Caco-2 (cell line): ENCODE measurements at regions of chr10 and their contacts with region 1.

Region 1: DNA sequence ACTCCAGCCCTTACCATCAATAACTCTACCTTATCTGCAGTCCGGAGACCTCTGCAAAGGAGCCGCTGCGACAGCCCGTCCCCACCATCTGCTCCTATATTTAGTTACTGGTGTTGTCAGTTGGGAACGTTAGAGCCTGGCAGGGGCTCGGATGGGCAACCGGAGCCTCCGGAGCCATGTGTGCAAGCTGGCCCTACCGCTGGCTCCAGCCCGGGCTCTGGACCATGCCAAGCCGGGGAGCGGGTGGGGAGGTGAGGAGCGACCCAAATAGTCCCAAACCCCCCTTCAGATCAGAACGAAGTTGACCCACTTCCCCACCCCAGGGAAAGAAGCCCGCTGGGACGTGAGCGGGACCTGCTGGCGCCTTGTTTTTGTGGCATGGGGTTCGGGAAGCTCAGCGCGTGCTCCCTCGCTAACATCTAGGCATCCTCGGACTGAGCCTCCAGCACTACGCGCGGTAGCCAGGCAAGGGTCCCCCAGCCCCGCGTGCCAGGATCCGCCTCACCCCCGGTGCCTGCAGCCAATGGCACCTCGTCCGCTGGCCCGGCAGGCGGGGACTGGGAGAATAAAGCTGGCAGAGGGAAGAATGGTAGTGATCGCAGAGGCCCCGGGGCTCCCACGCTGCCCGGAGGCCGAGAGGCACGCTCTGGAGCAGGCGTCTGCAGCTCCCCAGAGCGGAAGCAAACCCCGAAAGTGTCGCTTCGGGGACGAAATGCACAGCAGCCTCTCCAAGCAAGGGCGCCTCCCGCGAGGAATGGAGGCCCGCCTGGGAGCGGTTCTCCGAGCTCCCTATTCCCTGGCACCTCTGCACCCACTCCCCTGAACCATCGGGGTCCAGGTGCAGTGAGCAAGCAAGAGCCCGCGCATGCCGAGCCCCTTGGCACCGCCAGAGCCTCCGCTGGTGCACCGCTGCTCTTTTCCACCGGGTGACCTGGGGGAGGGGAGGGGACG is 679 bp downstream of the LRRC20 start:
- DNase-seq: peak; percentile 65 to 72
- H3K4me3 ChIP-seq: peak overlapping the region; percentile 73
- H3K4me3 Mint-ChIP-seq: peak overlapping the region; percentile 83
- H3K27ac Mint-ChIP-seq: peak overlapping the region; percentile 61
- H3K4me1 ChIP-seq: peaks cover 38% of the 10 kb centered on the region
- H3K4me1 Mint-ChIP-seq: peaks cover 21% of the 10 kb centered on the region
- H3K27me3 ChIP-seq: no peaks in the 10 kb centered on the region
- H3K27me3 Mint-ChIP-seq: no peaks in the 10 kb centered on the region
- CTCF ChIP-seq: no peak

Region 2: DNA sequence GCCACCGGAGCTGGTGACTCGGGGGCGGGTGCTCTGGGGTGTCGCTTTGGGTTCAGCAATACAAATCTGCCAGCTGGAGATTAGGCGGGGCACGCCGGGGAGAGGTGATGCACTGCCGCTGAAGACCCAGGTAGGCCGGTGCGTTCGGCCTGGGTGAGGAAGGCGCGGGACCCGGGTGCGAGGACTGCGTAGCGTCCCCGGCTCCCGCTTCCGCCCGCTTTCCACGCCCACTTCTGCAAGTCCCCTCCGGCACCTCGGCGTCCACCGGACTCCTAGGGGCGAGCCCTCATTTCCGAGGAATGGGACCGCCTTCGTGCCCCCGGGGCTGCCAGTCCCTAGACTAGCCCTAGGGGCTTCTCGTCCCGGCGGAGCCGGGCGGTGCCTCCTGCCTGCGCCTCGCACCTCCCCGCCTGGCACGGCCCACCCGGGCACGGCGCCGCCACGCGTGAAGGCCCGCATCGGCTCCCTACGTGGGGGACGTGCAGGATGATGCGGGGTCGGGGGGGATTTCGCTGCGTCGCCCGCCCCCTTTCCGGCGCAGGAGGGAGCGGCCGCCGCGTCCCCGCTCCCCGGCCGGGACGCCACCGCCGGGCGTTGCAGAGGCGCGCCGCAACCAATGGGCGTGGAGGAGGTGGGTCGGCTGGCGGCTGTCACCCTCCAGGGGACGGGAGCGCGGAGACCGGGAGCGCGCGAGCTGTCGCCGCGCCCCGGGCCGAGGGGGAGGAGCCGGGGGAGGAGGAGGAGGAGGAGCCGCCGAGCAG is 1063.5 kb before region 1 on chr10:
- CTCF ChIA-PET with region 1: no interaction called
- POLR2A ChIA-PET with region 1: no interaction called
- intact Hi-C with region 1: no loop called
- DNase-seq: peak; percentile 92 to 98
- H3K4me3 ChIP-seq: peak overlapping the region; percentile 64
- H3K4me3 Mint-ChIP-seq: peak overlapping the region; percentile 87
- H3K27ac Mint-ChIP-seq: peak overlapping the region; percentile 53
- H3K4me1 ChIP-seq: peaks cover 48% of the 10 kb centered on the region
- H3K4me1 Mint-ChIP-seq: peaks cover 25% of the 10 kb centered on the region
- H3K27me3 ChIP-seq: no peaks in the 10 kb centered on the region
- H3K27me3 Mint-ChIP-seq: no peaks in the 10 kb centered on the region
- CTCF ChIP-seq: no peak

Region 3: GRCh38 chr10:70221030-70221429 is 160.7 kb before region 1 on chr10:
- CTCF ChIA-PET with region 1: interaction called, 131 read pairs
- POLR2A ChIA-PET with region 1: interaction called, 6 read pairs
- intact Hi-C with region 1: no loop called
- DNase-seq: no peak
- H3K4me3 ChIP-seq: no peak overlapping the region
- H3K4me3 Mint-ChIP-seq: no peak overlapping the region
- H3K27ac Mint-ChIP-seq: peak overlapping the region; percentile 19
- H3K4me1 ChIP-seq: peaks cover 12% of the 10 kb centered on the region; the same call in 1 of the 2 replicates
- H3K4me1 Mint-ChIP-seq: peaks cover 14% of the 10 kb centered on the region
- H3K27me3 ChIP-seq: no peaks in the 10 kb centered on the region
- H3K27me3 Mint-ChIP-seq: no peaks in the 10 kb centered on the region
- CTCF ChIP-seq: no peak

Region 4: DNA sequence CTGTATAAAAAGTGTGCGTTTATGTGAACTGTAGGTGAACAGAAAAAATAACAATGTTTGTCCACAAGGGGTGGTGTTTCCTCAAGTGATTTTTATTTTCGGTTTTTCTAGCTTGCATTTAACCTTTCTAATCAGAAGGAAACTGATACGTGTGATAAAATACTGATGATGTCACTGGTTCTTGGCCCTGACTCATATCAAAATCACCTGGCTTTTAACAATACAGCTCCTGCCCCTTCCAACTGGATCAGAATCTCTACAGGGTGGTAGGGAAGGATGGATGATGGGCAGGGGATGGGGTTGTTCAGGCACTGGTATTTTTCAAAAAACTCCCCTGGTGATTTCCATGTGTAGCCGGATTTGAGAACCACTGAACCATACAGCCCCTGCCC is 108.8 kb before region 1 on chr10:
- CTCF ChIA-PET with region 1: interaction called, 10 read pairs
- POLR2A ChIA-PET with region 1: no interaction called
- intact Hi-C with region 1: no loop called
- DNase-seq: no peak
- H3K4me3 ChIP-seq: no peak overlapping the region
- H3K4me3 Mint-ChIP-seq: no peak overlapping the region
- H3K27ac Mint-ChIP-seq: no peak overlapping the region
- H3K4me1 ChIP-seq: no peaks in the 10 kb centered on the region; the same call in 1 of the 2 replicates
- H3K4me1 Mint-ChIP-seq: no peaks in the 10 kb centered on the region
- H3K27me3 ChIP-seq: no peaks in the 10 kb centered on the region; the same call in 1 of the 2 replicates
- H3K27me3 Mint-ChIP-seq: no peaks in the 10 kb centered on the region
- CTCF ChIP-seq: peak; percentile 50 to 68

Region 5: DNA sequence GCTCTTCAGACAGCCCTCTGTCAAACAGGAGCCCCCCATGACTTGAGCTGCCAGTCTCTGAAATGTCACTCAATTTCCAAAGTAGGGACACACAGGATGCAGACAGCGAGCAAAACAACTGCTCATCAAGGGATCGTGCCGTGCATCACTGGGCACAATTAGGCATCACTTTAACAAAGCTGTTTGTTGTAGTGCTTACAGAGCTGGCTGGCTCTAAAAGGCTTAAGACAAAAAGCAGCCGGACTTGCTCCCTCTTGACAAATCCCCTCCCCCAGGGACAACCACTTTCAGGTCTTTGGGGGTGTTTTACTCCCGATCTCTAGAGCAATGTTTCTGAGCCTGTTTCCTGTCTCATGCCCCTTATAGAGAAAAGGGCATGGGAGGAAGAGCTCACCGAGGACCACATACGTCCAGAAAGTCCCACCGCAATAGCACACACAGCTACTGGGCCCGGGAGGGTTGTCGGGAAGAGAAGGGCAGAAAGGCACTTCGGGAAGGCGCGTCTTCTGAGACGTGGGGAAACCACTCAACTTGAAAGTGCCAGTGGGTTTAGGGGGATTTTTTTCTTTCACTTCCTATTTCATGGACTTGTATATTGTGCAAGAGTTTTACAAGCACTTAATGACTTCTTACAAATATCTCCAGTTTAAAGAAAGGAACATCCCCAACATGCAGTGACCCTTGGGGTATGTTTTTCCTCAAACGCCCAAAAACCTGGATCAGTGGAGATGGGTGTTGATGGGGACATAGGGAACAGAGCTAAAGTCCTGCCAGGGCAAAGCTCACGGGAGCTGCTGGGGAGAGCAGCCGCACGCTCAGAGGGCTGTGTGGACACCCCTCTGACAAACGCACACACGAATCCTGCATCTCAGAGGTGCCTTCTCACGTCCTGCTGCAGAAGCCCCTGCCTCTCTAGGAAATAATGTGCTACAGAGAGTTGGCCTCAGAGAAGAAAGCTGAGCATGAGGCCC is 26.4 kb before region 1 on chr10:
- CTCF ChIA-PET with region 1: interaction called, 14 read pairs
- POLR2A ChIA-PET with region 1: no interaction called
- intact Hi-C with region 1: no loop called
- DNase-seq: no peak
- H3K4me3 ChIP-seq: no peak overlapping the region
- H3K4me3 Mint-ChIP-seq: no peak overlapping the region
- H3K27ac Mint-ChIP-seq: no peak overlapping the region
- H3K4me1 ChIP-seq: peaks cover 60% of the 10 kb centered on the region
- H3K4me1 Mint-ChIP-seq: peaks cover 47% of the 10 kb centered on the region
- H3K27me3 ChIP-seq: no peaks in the 10 kb centered on the region
- H3K27me3 Mint-ChIP-seq: no peaks in the 10 kb centered on the region
- CTCF ChIP-seq: no peak

Region 6: DNA sequence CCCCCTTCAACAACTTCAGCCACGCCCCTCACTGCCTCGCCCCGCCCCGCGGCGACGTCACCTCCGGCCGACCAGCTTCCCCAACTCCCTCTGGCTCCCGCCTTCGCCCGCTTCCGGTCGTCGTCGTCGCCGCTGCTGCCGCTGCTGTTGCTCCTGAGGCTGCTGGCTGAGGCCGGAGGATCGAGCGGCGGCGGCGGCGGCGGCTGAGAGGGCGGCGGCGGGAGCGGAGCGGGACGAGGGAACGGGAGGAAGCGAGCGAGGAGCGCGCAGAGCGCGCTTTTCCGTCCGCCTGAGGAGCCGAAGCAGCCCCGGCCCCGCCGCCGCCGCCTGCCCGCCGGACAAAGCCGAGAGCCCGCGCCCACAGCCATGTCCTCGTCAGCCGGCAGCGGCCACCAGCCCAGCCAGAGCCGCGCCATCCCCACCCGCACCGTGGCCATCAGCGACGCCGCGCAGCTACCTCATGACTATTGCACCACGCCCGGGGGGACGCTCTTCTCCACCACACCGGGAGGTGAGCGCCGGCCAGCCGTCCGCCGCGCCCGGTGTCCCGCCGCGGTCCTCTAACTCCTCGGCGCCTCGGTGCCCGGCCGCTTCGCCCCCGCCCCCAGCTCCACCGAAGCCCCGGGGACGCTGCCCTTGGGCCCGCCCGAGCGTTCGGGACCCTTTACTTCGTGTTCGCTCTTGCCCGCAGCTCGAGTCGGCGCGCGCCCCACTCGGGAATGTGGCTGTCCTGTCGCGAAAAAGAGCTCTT is 22.5 kb after region 1 on chr10 and contains the start of gene EIF4EBP2:
- CTCF ChIA-PET with region 1: interaction called, 31 read pairs
- POLR2A ChIA-PET with region 1: interaction called, 34 read pairs
- intact Hi-C with region 1: no loop called
- DNase-seq: peak; percentile 99 to 100
- H3K4me3 ChIP-seq: peak within 1 kb of the TSS; percentile 99
- H3K4me3 Mint-ChIP-seq: peak within 1 kb of the TSS; percentile 95
- H3K27ac Mint-ChIP-seq: peak within 1 kb of the TSS; percentile 91
- H3K4me1 ChIP-seq: peaks cover 15% of the 10 kb centered on the region
- H3K4me1 Mint-ChIP-seq: peaks cover 47% of the 10 kb centered on the region
- H3K27me3 ChIP-seq: no peaks in the 10 kb centered on the region
- H3K27me3 Mint-ChIP-seq: no peaks in the 10 kb centered on the region
- CTCF ChIP-seq: no peak
- total RNA-seq, gene EIF4EBP2: 166 and 168 TPM in 2 replicates

Region 7: DNA sequence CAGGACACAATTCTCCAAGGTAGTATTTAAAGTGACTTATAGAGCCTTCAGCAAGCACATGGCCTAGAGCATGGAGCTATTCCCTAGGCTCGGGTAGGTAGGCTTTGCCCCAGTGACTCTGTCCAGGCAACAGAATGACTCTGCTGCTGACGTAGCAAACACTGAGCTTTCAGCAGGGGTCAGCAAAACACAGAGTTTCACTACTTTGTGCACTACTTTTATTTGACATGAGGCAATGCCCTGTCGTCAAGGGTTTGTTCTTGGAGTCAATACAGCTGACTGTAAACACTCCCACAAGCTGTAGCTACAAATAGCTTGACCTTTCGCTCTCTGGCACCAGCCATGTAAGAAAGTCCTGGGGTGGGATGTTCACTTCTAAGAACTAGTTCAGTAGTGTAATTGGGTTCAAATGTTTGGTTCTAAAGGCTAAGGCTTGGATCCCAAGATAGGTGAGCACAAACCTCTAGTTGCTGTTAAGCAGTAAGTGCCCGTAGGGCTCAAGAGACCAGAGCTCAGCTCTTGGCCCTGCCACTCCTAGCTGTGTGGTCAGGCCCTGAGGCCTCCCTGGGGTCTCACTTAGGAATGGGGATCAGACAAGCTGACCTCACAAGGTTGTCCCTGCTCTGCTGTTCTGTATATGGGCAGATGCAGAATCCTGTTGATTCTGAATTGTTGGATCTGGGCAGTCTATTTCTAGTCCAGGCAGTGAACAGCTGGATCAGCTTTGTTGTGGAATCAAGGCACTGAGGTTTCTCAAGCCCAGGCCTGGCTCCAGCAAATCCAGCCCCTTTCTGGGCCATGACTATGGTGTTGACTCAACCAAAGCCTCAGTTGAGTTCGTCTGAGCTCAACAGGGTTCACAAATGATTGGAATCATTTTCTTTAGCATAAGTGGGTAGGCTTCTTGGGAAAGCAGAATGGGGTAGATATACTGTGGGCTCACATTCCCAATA is 49.0 kb after region 1 on chr10:
- CTCF ChIA-PET with region 1: interaction called, 20 read pairs
- POLR2A ChIA-PET with region 1: no interaction called
- intact Hi-C with region 1: loop called (anchors 2 kb)
- DNase-seq: peak; percentile 76 to 86
- H3K4me3 ChIP-seq: no peak overlapping the region
- H3K4me3 Mint-ChIP-seq: no peak overlapping the region
- H3K27ac Mint-ChIP-seq: no peak overlapping the region
- H3K4me1 ChIP-seq: peaks cover 28% of the 10 kb centered on the region
- H3K4me1 Mint-ChIP-seq: peaks cover 4% of the 10 kb centered on the region
- H3K27me3 ChIP-seq: no peaks in the 10 kb centered on the region
- H3K27me3 Mint-ChIP-seq: no peaks in the 10 kb centered on the region
- CTCF ChIP-seq: peak in 1 of 2 experiments; percentile 66